ENCODE measurements at regions of chr20 and their contacts with region 1.

Region 1: GRCh38 chr20:54199721-54200176 is 8.1 kb upstream of the PFDN4 start:
- H3K4me3 Mint-ChIP-seq: no peak overlapping the region
- H3K27ac Mint-ChIP-seq: no peak overlapping the region
- H3K4me1 Mint-ChIP-seq: peaks cover 36% of the 10 kb centered on the region
- H3K27me3 Mint-ChIP-seq: no peaks in the 10 kb centered on the region

Region 2: DNA sequence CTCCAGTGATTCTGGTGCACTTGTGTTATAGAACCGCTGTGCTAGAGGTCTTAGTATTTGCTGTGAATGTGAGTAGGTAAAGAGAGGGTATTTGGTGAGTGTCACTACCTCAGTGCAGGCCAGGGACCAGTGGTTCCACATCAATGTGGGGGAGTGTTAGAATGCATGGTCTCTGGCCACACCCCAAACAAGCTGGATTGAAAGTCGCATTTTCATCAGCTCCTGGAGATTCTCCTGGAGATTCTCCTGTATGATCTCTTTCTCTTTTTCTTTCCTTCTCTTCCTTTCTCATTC is 102.6 kb before region 1 on chr20:
- intact Hi-C with region 1: loop called (anchors 1 kb)
- H3K4me3 Mint-ChIP-seq: no peak overlapping the region
- H3K27ac Mint-ChIP-seq: no peak overlapping the region
- H3K4me1 Mint-ChIP-seq: peaks cover 11% of the 10 kb centered on the region
- H3K27me3 Mint-ChIP-seq: no peaks in the 10 kb centered on the region